Naive thymus-derived CD4-positive, alpha-beta T cell (primary cell): ENCODE measurements at regions of chr4 and their contacts with region 1.

Region 1: GRCh38 chr4:140012688-140013486 is 141.1 kb downstream of the MAML3 start:
- DNase-seq: peak; percentile 7 to 77 (median 66)
- ATAC-seq: peak; percentile 94
- H3K4me3 ChIP-seq: no peak overlapping the region
- H3K4me3 Mint-ChIP-seq: peak overlapping the region in 1 of 10 donors; percentile 1
- H3K27ac ChIP-seq: no peak overlapping the region
- H3K27ac Mint-ChIP-seq: peak overlapping the region in 1 of 9 donors; percentile 11
- H3K4me1 ChIP-seq: no peaks in the 10 kb centered on the region
- H3K4me1 Mint-ChIP-seq: peaks cover 5 to 9% (median 8%) of the 10 kb centered on the region in 7 donors
- H3K27me3 ChIP-seq: no peaks in the 10 kb centered on the region
- H3K27me3 Mint-ChIP-seq: peaks cover 0 to 39% (median 0%) of the 10 kb centered on the region in 5 donors

Region 2: DNA sequence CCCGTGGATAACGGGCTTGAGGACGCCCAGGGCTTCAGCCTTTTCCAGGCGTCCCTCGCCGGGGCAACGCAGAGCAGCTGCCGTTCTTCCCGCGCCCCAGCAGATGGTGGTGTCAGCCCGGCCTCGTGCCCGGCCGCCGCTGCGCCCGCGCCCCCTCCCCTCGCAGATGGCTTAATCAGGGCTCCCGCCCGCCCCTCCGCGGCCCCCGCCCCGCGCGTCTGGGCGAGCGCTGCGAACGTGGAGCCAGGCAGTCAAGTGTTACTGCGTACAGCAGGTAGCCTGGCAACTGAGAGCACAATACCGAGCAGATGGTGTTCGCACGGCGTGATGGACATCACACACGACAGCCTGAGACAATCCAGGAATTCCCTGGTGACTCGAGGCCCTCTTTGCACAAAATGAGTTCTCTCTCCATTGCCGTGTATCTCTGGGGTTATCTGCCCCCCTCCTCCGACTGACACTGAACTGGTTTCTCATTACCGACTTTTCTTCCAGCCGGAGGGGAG is 278.0 kb before region 1 on chr4:
- CTCF ChIA-PET with region 1: no interaction called
- POLR2A ChIA-PET with region 1: no interaction called
- intact Hi-C with region 1: loop called (anchors 2 to 10 kb)
- DNase-seq: peak; percentile 12 to 67 (median 45)
- ATAC-seq: peak; percentile 87
- H3K4me3 ChIP-seq: peak overlapping the region; percentile 44
- H3K4me3 Mint-ChIP-seq: peak overlapping the region; percentile 70 to 89 (median 78)
- H3K27ac ChIP-seq: no peak overlapping the region
- H3K27ac Mint-ChIP-seq: peak overlapping the region in 1 of 9 donors; percentile 29
- H3K4me1 ChIP-seq: peaks cover 0 to 5% of the 10 kb centered on the region in 2 donors
- H3K4me1 Mint-ChIP-seq: peaks cover 6 to 17% (median 13%) of the 10 kb centered on the region in 7 donors
- H3K27me3 ChIP-seq: no peaks in the 10 kb centered on the region
- H3K27me3 Mint-ChIP-seq: peaks cover 30 to 58% (median 39%) of the 10 kb centered on the region in 5 donors

Region 3: GRCh38 chr4:140049024-140049848 is 36.3 kb after region 1 on chr4:
- CTCF ChIA-PET with region 1: no interaction called
- POLR2A ChIA-PET with region 1: no interaction called
- intact Hi-C with region 1: loop called (anchors 1 to 2 kb)
- DNase-seq: peak in 8 of 9 donors; percentile 13 to 73 (median 61)
- ATAC-seq: peak; percentile 92
- H3K4me3 ChIP-seq: peak overlapping the region; percentile 45
- H3K4me3 Mint-ChIP-seq: peak overlapping the region; percentile 76 to 93 (median 86)
- H3K27ac ChIP-seq: peak overlapping the region; percentile 46
- H3K27ac Mint-ChIP-seq: peak overlapping the region; percentile 77 to 94 (median 82)
- H3K4me1 ChIP-seq: peaks cover 3 to 14% of the 10 kb centered on the region in 2 donors
- H3K4me1 Mint-ChIP-seq: peaks cover 7 to 60% (median 41%) of the 10 kb centered on the region in 7 donors
- H3K27me3 ChIP-seq: no peaks in the 10 kb centered on the region
- H3K27me3 Mint-ChIP-seq: peaks cover 0 to 64% (median 0%) of the 10 kb centered on the region in 5 donors

Region 4: GRCh38 chr4:140095694-140096482 is 83.0 kb after region 1 on chr4:
- CTCF ChIA-PET with region 1: no interaction called
- POLR2A ChIA-PET with region 1: no interaction called
- intact Hi-C with region 1: loop called in 1 of 2 experiments (anchors 1 kb)
- DNase-seq: peak in 8 of 9 donors; percentile 46 to 92 (median 71)
- ATAC-seq: peak; percentile 73
- H3K4me3 ChIP-seq: peak overlapping the region; percentile 39
- H3K4me3 Mint-ChIP-seq: peak overlapping the region; percentile 68 to 97 (median 88)
- H3K27ac ChIP-seq: peak overlapping the region; percentile 73
- H3K27ac Mint-ChIP-seq: peak overlapping the region; percentile 90 to 99 (median 95)
- H3K4me1 ChIP-seq: peaks cover 5 to 53% of the 10 kb centered on the region in 2 donors
- H3K4me1 Mint-ChIP-seq: peaks cover 51 to 83% (median 75%) of the 10 kb centered on the region in 7 donors
- H3K27me3 ChIP-seq: no peaks in the 10 kb centered on the region
- H3K27me3 Mint-ChIP-seq: peaks cover 0 to 2% (median 0%) of the 10 kb centered on the region in 5 donors

Region 5: DNA sequence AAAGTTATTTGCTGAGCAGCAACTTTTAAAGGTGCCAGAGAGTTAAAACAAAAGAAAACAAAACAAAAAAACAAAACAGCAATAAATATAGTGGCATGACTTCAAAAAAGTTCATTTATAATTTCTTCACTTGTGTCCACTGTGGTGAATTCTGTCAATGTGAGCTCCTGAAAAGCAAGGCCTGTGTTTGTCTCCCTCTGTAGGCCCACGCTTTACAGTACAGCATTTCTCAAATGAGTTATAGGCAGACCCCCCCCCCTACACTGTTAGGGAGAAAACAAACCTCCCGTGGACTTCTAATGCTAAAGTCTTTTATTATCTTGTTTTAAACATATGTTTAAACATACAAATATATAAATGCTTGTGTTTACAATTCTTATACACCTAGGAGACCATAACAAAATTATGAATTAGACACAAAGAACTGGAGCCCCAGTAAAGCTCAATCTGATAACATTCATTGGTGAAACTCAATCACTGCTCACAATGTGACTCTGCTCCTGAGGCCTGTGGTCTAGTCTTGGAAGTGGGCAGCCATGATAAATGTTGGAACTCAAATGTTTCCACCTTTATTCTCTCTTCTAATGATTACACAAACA is 313.6 kb after region 1 on chr4:
- CTCF ChIA-PET with region 1: interaction called, 4 read pairs
- POLR2A ChIA-PET with region 1: no interaction called
- intact Hi-C with region 1: loop called (anchors 1 kb)
- DNase-seq: no peak
- ATAC-seq: no peak
- H3K4me3 ChIP-seq: no peak overlapping the region
- H3K4me3 Mint-ChIP-seq: no peak overlapping the region
- H3K27ac ChIP-seq: no peak overlapping the region
- H3K27ac Mint-ChIP-seq: no peak overlapping the region
- H3K4me1 ChIP-seq: no peaks in the 10 kb centered on the region
- H3K4me1 Mint-ChIP-seq: peaks cover 0 to 11% (median 3%) of the 10 kb centered on the region in 7 donors
- H3K27me3 ChIP-seq: no peaks in the 10 kb centered on the region
- H3K27me3 Mint-ChIP-seq: peaks cover 0 to 28% (median 4%) of the 10 kb centered on the region in 5 donors

Region 6: DNA sequence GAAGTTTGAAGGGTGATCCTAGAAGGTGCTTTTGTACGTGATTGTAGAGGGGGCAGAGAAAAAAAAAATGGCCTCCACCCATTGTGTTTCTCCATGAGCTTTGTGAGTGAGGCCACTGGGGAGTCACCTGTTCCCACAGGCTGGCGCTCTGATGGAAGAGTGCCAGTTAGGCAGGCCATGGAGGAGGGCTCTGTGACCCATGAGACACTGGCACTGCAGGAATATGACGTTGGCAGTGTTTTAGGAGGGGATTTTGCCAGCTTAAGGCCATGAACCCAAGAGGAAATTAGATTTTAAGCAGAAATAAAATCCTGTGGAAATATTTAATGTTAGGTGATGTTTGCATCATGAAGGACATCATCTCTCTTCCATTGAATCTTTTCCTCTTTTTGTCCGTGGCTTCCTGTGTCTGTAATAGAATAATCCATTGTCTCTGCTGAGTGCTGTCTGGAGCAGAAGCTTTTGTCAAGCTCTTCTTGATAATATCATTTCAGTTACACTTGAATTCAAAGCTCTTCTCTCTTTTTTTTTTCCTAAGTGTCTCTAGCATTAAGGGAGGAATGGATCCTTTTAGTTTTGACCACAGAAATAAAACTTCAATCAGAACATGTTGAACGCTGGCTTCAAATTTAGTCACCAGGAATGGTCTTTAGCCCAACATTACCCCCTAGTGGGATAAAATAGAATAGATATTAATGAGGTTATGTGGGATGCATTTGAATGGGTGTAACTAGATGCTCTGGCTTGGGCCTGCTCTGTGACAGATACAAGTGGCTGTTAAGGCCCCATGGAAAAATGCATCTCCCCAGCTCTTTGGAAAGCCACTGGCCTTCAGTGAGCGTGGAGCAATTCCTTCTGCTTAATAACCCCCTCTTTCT is 596.9 kb after region 1 on chr4:
- CTCF ChIA-PET with region 1: no interaction called
- POLR2A ChIA-PET with region 1: no interaction called
- intact Hi-C with region 1: loop called in 1 of 2 experiments (anchors 10 kb)
- DNase-seq: peak in 5 of 9 donors; percentile 21 to 49 (median 25)
- ATAC-seq: peak; percentile 73
- H3K4me3 ChIP-seq: no peak overlapping the region
- H3K4me3 Mint-ChIP-seq: no peak overlapping the region
- H3K27ac ChIP-seq: no peak overlapping the region
- H3K27ac Mint-ChIP-seq: no peak overlapping the region
- H3K4me1 ChIP-seq: no peaks in the 10 kb centered on the region
- H3K4me1 Mint-ChIP-seq: peaks cover 0 to 2% (median 0%) of the 10 kb centered on the region in 7 donors
- H3K27me3 ChIP-seq: no peaks in the 10 kb centered on the region
- H3K27me3 Mint-ChIP-seq: peaks cover 0 to 7% (median 0%) of the 10 kb centered on the region in 5 donors